CD4-positive, alpha-beta T cell (primary cell): ENCODE measurements at regions of chr16 and their contacts with region 1.

Region 1: GRCh38 chr16:21646721-21647561 is 5.5 kb downstream of the IGSF6 start:
- DNase-seq: peak; percentile 50 to 90 (median 68)
- ATAC-seq: peak; percentile 79
- H3K4me3 ChIP-seq: peak overlapping the region; percentile 6
- H3K4me3 Mint-ChIP-seq: peak overlapping the region; percentile 75
- H3K27ac ChIP-seq: peak overlapping the region; percentile 66 to 82
- H3K27ac Mint-ChIP-seq: peak overlapping the region; percentile 91
- H3K4me1 ChIP-seq: peaks cover 59% of the 10 kb centered on the region
- H3K4me1 Mint-ChIP-seq: peaks cover 56% of the 10 kb centered on the region
- H3K27me3 ChIP-seq: no peaks in the 10 kb centered on the region
- H3K27me3 Mint-ChIP-seq: no peaks in the 10 kb centered on the region
- CTCF ChIP-seq: no peak

Region 2: GRCh38 chr16:21727344-21727743 is 80.4 kb after region 1 on chr16:
- CTCF ChIA-PET with region 1: no interaction called
- POLR2A ChIA-PET with region 1: no interaction called
- intact Hi-C with region 1: no loop called
- DNase-seq: peak in 1 of 14 experiments; percentile 4
- ATAC-seq: peak; percentile 24
- H3K4me3 ChIP-seq: no peak overlapping the region
- H3K4me3 Mint-ChIP-seq: no peak overlapping the region
- H3K27ac ChIP-seq: no peak overlapping the region
- H3K27ac Mint-ChIP-seq: no peak overlapping the region
- H3K4me1 ChIP-seq: no peaks in the 10 kb centered on the region
- H3K4me1 Mint-ChIP-seq: peaks cover 12% of the 10 kb centered on the region
- H3K27me3 ChIP-seq: no peaks in the 10 kb centered on the region
- H3K27me3 Mint-ChIP-seq: peaks cover 35% of the 10 kb centered on the region
- CTCF ChIP-seq: no peak

Region 3: DNA sequence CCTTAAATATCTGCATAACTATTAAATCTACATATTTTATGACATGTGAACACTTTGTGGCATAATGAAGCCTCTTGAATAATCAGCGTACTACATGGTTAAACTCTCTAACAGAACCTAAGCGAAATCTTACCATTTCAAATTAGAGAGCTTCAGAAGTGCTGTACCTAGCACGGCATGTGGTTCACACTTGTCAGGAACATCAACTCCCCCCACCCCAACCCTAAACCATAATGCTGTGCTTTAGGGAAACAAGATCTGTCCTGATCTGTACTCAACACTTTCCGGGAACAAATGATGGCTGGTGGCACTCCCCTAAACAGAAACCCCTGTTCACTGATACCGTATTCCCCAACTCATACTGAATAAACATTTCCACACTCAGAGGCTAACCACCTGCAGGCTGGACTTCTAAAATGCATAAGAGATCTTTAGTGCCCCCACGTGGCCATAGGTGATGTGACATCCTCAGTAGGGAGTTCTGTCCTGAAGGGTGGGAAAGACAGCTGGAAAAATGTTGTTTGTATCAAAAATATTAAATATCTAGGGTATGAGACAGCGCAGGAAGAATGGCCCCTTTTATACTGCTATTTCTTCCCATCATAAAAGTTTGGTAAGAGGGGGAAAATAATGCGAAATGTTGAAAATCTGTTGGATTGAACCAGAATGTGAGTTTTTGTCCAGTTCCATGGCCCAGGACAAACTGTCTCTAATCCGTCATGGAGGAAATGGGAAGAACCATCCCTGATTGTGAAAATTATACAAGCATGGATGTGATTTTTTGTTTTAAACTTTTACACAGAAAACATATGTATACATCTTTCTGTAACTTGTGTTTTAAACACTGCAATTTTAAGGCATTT is 1413.7 kb after region 1 on chr16:
- CTCF ChIA-PET with region 1: no interaction called
- POLR2A ChIA-PET with region 1: no interaction called
- intact Hi-C with region 1: loop called (anchors 5 kb)
- DNase-seq: peak; percentile 18 to 74 (median 38)
- ATAC-seq: peak; percentile 77
- H3K4me3 ChIP-seq: no peak overlapping the region
- H3K4me3 Mint-ChIP-seq: no peak overlapping the region
- H3K27ac ChIP-seq: no peak overlapping the region
- H3K27ac Mint-ChIP-seq: no peak overlapping the region
- H3K4me1 ChIP-seq: no peaks in the 10 kb centered on the region
- H3K4me1 Mint-ChIP-seq: no peaks in the 10 kb centered on the region
- H3K27me3 ChIP-seq: peaks cover 0 to 4% of the 10 kb centered on the region in 2 experiments
- H3K27me3 Mint-ChIP-seq: peaks cover 14% of the 10 kb centered on the region
- CTCF ChIP-seq: peak; percentile 88